GM10248 (cell line): ENCODE measurements at regions of chr6 and their contacts with region 1.

Region 1: DNA sequence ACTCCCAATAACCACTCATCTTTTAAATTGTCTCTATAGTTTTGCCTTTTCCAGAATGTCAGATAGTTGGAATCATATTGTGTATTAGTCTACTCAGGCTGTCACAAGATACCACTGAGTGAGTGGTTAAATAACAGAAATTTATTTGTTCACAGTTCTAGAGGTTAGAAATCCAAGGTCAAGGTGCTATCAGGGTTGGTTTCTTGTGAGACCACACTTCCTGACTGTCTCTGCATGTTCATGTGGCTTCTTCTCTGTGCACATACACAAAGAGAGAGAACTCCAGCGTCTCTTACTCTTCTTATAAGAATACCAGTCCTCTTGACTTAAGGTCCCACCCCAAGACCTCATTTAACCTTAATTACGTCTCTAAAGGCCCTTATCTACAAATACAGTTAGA is 23.9 kb upstream of the PRSS35 start:
- DNase-seq: no peak
- CTCF ChIP-seq: no peak

Region 2: GRCh38 chr6:82891076-82891475 is 597.4 kb before region 1 on chr6:
- CTCF ChIA-PET with region 1: no interaction called
- POLR2A ChIA-PET with region 1: no interaction called
- DNase-seq: no peak
- CTCF ChIP-seq: no peak

Region 3: GRCh38 chr6:83467620-83468036 is 20.8 kb before region 1 on chr6:
- CTCF ChIA-PET with region 1: no interaction called
- POLR2A ChIA-PET with region 1: no interaction called
- DNase-seq: no peak
- CTCF ChIP-seq: no peak

Region 4: DNA sequence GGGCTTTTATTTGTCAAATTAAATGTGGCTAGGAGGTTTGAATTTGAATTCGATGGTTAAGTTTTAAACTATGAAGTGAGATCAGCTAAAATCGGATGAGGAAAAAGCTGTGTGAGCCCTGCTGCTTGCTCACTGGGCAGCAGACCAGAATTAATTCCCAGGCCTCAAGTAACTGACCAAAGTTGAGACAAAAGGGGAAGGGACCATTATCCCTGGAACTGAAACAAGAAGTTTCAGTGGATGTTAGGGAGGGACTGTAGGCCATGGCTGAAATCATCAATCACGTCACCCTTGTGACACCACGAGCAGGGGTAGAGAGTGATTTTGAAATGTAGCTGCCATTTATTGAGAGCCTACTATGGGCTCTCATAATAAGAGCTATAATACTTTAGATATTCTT is 16.9 kb after region 1 on chr6:
- CTCF ChIA-PET with region 1: interaction called, 14 read pairs
- POLR2A ChIA-PET with region 1: no interaction called
- DNase-seq: no peak
- CTCF ChIP-seq: no peak

Region 5: DNA sequence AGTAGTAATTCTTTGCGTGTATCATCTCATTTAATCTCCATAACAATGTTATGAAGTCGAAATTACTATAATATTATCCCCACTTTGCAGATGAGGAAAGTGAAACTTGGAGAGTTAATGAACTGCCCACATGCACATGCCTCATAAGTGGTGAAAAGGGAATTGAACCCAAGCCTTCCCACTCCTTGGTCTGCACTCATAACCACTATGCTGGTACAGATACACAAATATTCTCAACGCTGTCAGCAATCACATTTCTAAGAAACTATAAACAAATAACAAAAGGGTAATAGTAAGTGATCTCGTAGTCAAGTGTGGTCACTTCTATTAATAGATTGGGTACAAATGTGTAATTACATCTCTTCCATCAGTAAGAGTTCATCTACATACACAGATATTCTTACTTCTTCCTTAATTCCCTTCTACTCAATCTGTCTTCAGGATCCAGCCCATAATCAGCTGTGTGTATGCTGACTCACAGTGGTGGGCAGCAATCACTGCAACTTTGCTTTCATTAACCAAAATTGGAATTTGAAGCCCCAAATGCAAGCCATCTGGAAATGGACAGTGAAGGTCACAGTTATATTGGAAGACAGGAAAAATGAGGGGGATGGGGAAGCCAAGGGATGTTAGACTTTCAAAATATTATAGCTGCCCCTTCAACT is 30.5 kb after region 1 on chr6:
- CTCF ChIA-PET with region 1: no interaction called
- POLR2A ChIA-PET with region 1: no interaction called
- DNase-seq: no peak
- CTCF ChIP-seq: peak; percentile 33